ENCODE measurements at regions of chr10 and their contacts with region 1.

Region 1: DNA sequence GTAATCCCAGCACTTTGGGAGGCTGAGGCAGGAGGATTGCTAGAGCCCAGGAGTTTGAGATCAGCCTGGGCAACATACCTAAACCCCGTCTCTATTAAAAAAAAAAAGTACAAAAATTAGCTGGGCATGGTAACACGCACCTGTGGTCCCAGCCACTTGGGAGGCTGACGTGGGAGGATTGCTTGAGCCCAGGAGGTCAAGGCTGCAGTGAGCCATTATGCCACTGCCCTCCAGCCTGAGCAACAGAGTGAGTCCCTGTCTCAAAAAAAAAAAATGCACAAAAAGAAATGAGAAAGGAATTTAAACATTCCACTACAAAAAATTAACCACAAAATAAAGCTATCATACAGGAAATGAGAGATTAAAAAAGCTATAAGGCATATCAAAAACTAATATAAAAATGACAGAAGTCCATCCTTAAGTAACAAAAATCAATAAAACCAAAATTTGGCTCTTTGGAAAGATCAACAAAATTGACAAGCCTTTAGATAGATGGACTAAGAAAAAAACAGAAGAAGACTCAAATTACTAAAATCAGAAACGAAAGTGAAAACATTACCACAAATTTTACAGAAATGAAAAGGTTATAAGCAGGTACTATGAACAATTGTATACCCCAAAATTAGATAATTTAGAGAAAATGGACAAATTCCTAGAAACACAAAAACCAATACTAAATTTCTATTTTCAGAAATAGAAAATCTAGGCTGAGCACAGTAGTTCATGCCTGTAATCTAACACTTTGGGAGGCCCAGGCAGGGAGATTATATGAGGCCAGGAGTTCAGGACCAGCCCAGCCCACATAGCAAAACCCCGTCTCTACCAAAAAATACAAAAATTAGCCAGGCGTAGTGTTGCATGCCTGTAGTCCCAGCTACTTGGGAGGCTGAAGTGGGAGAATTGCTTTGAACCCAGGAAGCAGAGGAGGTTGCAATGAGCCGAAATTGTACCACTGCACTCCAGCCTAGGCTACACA is 42.4 kb upstream of the NANOS1 start:
- DNase-seq: no peak
- ATAC-seq: no peak
- H3K4me3 Mint-ChIP-seq: no peak overlapping the region
- H3K27ac Mint-ChIP-seq: no peak overlapping the region
- H3K4me1 Mint-ChIP-seq: peaks cover 5% of the 10 kb centered on the region
- H3K27me3 Mint-ChIP-seq: peaks cover 5% of the 10 kb centered on the region
- CTCF ChIP-seq: no peak

Region 2: DNA sequence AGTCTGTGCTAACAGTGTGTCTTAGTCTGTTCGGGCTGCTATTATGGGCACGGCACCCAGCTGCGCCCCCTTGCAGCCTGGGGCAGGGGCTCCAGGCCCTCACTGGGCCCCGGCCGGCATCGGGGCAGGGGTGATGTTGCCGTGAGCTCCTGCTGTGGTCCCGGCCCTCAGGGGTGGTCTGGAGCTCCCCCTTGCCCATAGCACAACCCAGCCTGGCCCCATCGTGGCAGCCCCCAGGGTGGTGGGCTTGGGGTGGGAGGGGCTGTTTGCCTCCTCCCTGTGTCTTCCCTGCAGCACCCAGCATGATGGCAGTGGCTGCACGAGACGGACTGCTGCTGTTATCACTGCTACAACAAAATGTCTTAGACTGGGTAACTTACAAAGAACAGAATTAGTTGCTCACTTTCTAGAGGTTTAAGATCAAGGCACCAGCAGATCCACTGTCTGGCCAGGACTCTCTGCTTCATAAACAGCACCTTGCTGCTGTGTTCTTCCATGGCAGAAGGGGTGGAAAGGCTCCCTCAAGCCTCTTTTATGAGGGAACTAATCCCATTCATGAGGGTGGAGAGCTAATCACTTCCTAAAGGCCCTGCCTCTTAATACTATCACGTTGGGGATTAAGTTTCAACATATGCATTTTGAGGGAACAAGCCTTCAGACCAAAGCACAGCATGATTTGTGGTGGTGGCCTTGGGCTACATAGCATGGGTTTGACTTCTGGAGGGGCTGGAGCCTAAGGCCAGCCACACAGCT is 1054.9 kb after region 1 on chr10:
- CTCF ChIA-PET with region 1: no interaction called
- POLR2A ChIA-PET with region 1: no interaction called
- intact Hi-C with region 1: loop called (anchors 5 kb)
- DNase-seq: no peak
- ATAC-seq: no peak
- H3K4me3 Mint-ChIP-seq: no peak overlapping the region
- H3K27ac Mint-ChIP-seq: no peak overlapping the region
- H3K4me1 Mint-ChIP-seq: no peaks in the 10 kb centered on the region
- H3K27me3 Mint-ChIP-seq: no peaks in the 10 kb centered on the region
- CTCF ChIP-seq: no peak

Measured in activated B cell treated with CpG ODN at 0.5 μM for 24 hours (primary cell).